ENCODE measurements at regions of chr12 and their contacts with region 1.

Region 1: GRCh38 chr12:3803865-3804472 is 51.1 kb upstream of the CRACR2A start:
- DNase-seq: peak; percentile 79 to 85
- ATAC-seq: peak; percentile 67
- H3K4me3 ChIP-seq: no peak overlapping the region
- H3K27ac ChIP-seq: no peak overlapping the region
- H3K4me1 ChIP-seq: no peaks in the 10 kb centered on the region
- H3K27me3 ChIP-seq: no peaks in the 10 kb centered on the region

Region 2: GRCh38 chr12:3299929-3300832 is 503.8 kb before region 1 on chr12:
- intact Hi-C with region 1: loop called (anchors 5 kb)
- DNase-seq: peak; percentile 91 to 94
- ATAC-seq: peak; percentile 73
- H3K4me3 ChIP-seq: no peak overlapping the region
- H3K27ac ChIP-seq: no peak overlapping the region
- H3K4me1 ChIP-seq: no peaks in the 10 kb centered on the region
- H3K27me3 ChIP-seq: no peaks in the 10 kb centered on the region

Region 3: DNA sequence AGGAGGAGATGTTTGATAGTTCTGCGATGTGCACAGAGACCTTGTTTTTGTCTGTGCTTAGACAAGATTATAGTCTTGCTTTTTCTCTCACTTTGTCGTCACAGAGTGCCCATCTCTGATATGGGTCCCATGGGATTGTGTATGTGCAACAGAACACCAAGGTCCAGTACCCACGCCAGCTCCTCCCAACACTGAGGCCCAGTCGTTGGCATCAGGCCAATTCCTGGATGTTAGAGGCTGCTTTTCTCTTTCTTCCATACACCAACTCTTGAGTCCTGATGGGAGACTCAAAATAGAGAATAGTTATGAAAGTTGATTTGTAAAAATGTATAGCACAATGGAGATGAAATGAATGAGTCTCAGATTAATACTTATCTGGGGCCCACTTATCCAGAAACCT is 335.6 kb before region 1 on chr12:
- intact Hi-C with region 1: no loop called
- DNase-seq: no peak
- ATAC-seq: no peak
- H3K4me3 ChIP-seq: no peak overlapping the region
- H3K27ac ChIP-seq: no peak overlapping the region
- H3K4me1 ChIP-seq: no peaks in the 10 kb centered on the region
- H3K27me3 ChIP-seq: no peaks in the 10 kb centered on the region

Region 4: GRCh38 chr12:3622021-3622821 is 181.7 kb before region 1 on chr12:
- intact Hi-C with region 1: no loop called
- DNase-seq: no peak
- ATAC-seq: no peak
- H3K4me3 ChIP-seq: no peak overlapping the region
- H3K27ac ChIP-seq: no peak overlapping the region
- H3K4me1 ChIP-seq: peaks cover 0 to 1% of the 10 kb centered on the region in 2 donors
- H3K27me3 ChIP-seq: no peaks in the 10 kb centered on the region